Adrenal gland (tissue), 19 donors: ENCODE measurements at regions of chr14 and their contacts with region 1.

Region 1: GRCh38 chr14:29927376-29928116 is at the start of gene PRKD1:
- DNase-seq: peak; percentile 67 to 81 (median 73)
- H3K4me3 ChIP-seq: peak within 1 kb of the TSS; percentile 58 to 92 (median 68)
- H3K27ac ChIP-seq: peak within 1 kb of the TSS in 4 of 5 donors; percentile 45 to 90 (median 76)
- H3K4me1 ChIP-seq: peaks cover 20 to 23% of the 10 kb centered on the region in 2 donors
- H3K27me3 ChIP-seq: no peaks in the 10 kb centered on the region
- CTCF ChIP-seq: peak in 3 of 6 experiments; percentile 15 to 40 (median 26)
- POLR2A ChIP-seq: peak in 1 of 2 donors; percentile 43
- total RNA-seq, gene PRKD1: 9.9 to 30.1 (median 24.3) TPM

Region 2: DNA sequence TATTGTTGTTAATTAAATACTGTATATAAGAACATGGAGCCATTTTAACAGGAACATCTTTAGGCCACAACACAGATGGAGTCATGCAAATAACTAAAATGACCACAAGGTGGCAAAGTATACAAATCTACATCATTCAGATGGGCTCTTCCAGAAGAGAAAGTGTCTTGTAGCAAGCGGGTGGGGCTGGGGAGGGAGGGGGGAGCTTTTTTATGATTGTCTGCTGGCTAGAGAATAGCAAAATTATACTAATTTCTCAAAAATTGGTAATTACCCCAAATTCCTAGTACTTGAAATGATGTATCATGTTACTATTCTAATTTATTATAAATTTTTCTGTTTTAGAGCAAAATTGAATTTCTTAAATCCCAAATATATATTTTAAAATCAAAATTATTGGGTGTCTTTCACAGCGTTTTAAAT is 378.6 kb before region 1 on chr14:
- intact Hi-C with region 1: loop called in 1 of 2 experiments (anchors 5 kb)
- DNase-seq: peak in 6 of 7 donors; percentile 9 to 61 (median 18)
- H3K4me3 ChIP-seq: no peak overlapping the region
- H3K27ac ChIP-seq: no peak overlapping the region
- H3K4me1 ChIP-seq: peaks cover 8 to 11% of the 10 kb centered on the region in 2 donors
- H3K27me3 ChIP-seq: no peaks in the 10 kb centered on the region
- CTCF ChIP-seq: peak; percentile 49 to 67 (median 60)
- POLR2A ChIP-seq: no peak

Region 3: DNA sequence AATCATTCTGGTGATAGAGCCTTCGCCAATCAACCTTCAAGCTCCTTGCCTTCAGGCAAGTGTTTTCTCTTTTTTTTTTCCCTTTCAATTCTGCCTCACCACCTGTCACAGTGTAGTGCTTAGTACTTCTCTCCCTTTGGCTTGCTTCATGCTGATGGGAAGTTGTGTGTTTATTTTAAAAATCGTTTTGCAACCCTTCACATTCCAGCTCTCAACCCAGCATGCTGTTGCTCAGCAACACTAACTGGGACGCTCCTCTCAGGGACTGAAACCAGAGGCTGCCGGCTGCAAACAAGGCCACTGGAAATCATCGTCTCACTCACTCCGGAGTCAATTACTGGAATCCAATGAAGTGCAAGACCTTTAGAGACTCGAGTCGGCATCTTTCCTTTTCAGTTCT is 342.6 kb before region 1 on chr14:
- intact Hi-C with region 1: loop called in 1 of 2 experiments (anchors 10 kb)
- DNase-seq: peak; percentile 59 to 91 (median 88)
- H3K4me3 ChIP-seq: peak overlapping the region in 1 of 4 donors; percentile 24
- H3K27ac ChIP-seq: peak overlapping the region in 3 of 5 donors; percentile 31 to 73 (median 37)
- H3K4me1 ChIP-seq: peaks cover 15 to 33% of the 10 kb centered on the region in 2 donors
- H3K27me3 ChIP-seq: no peaks in the 10 kb centered on the region
- CTCF ChIP-seq: no peak
- POLR2A ChIP-seq: no peak

Region 4: DNA sequence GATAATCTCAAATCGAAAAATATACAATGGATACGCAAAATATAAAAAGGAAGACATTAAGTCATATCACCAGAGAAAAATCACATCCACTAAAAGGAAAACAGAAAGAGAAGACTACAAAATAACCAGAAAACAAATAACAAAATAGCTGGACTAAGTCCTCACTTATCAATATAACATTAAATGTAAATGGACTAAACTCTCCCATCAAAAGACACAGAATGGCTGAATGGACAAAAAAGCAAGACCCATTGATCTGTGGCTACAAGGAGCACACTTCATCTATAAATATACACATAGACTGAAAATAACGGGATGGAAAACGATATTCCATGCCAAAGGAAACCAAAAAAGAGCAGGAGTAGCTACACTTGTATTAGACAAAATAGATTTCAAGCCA is 161.1 kb after region 1 on chr14:
- intact Hi-C with region 1: no loop called
- DNase-seq: no peak
- H3K4me3 ChIP-seq: no peak overlapping the region
- H3K27ac ChIP-seq: no peak overlapping the region
- H3K4me1 ChIP-seq: no peaks in the 10 kb centered on the region
- H3K27me3 ChIP-seq: no peaks in the 10 kb centered on the region
- CTCF ChIP-seq: no peak
- POLR2A ChIP-seq: no peak